CD4-positive, alpha-beta T cell (primary cell): ENCODE measurements at regions of chr1 and their contacts with region 1.

Region 1: GRCh38 chr1:206972728-206973127 is 2.5 kb upstream of the FCAMR start:
- DNase-seq: no peak
- ATAC-seq: no peak
- H3K4me3 ChIP-seq: no peak overlapping the region
- H3K4me3 Mint-ChIP-seq: no peak overlapping the region
- H3K27ac ChIP-seq: no peak overlapping the region
- H3K27ac Mint-ChIP-seq: no peak overlapping the region
- H3K4me1 ChIP-seq: peaks cover 5% of the 10 kb centered on the region
- H3K4me1 Mint-ChIP-seq: peaks cover 8% of the 10 kb centered on the region
- H3K27me3 ChIP-seq: no peaks in the 10 kb centered on the region
- H3K27me3 Mint-ChIP-seq: no peaks in the 10 kb centered on the region
- CTCF ChIP-seq: no peak

Region 2: DNA sequence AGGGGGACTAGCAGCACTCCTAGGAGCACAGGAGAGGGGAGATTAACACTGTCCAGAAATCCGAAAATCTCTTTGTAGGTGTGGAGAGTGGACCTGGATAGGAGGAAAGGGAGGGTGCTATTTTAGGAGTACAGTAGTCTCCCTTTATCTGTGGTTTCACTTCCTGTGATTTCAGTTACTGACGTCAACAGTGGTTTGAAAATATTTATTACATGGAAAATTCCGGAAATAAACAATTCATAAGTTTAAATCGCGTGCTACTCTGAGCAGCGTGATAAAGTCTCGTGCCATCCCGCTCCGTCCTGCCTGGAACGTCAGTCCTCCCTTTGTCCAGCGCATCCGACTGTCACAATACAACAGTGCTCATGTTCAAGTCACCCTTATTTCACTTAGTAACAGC is 82.0 kb before region 1 on chr1:
- CTCF ChIA-PET with region 1: no interaction called
- POLR2A ChIA-PET with region 1: no interaction called
- intact Hi-C with region 1: no loop called
- DNase-seq: peak in 3 of 14 experiments; percentile 57 to 72 (median 63)
- ATAC-seq: peak; percentile 78
- H3K4me3 ChIP-seq: no peak overlapping the region
- H3K4me3 Mint-ChIP-seq: peak overlapping the region; percentile 26
- H3K27ac ChIP-seq: no peak overlapping the region
- H3K27ac Mint-ChIP-seq: peak overlapping the region; percentile 22
- H3K4me1 ChIP-seq: peaks cover 21% of the 10 kb centered on the region
- H3K4me1 Mint-ChIP-seq: peaks cover 53% of the 10 kb centered on the region
- H3K27me3 ChIP-seq: no peaks in the 10 kb centered on the region
- H3K27me3 Mint-ChIP-seq: no peaks in the 10 kb centered on the region
- CTCF ChIP-seq: no peak

Region 3: GRCh38 chr1:206953126-206953525 is 19.6 kb before region 1 on chr1:
- CTCF ChIA-PET with region 1: no interaction called
- POLR2A ChIA-PET with region 1: no interaction called
- intact Hi-C with region 1: no loop called
- DNase-seq: no peak
- ATAC-seq: no peak
- H3K4me3 ChIP-seq: no peak overlapping the region
- H3K4me3 Mint-ChIP-seq: no peak overlapping the region
- H3K27ac ChIP-seq: no peak overlapping the region
- H3K27ac Mint-ChIP-seq: no peak overlapping the region
- H3K4me1 ChIP-seq: no peaks in the 10 kb centered on the region
- H3K4me1 Mint-ChIP-seq: no peaks in the 10 kb centered on the region
- H3K27me3 ChIP-seq: peaks cover 0 to 3% of the 10 kb centered on the region in 2 experiments
- H3K27me3 Mint-ChIP-seq: no peaks in the 10 kb centered on the region
- CTCF ChIP-seq: no peak

Region 4: DNA sequence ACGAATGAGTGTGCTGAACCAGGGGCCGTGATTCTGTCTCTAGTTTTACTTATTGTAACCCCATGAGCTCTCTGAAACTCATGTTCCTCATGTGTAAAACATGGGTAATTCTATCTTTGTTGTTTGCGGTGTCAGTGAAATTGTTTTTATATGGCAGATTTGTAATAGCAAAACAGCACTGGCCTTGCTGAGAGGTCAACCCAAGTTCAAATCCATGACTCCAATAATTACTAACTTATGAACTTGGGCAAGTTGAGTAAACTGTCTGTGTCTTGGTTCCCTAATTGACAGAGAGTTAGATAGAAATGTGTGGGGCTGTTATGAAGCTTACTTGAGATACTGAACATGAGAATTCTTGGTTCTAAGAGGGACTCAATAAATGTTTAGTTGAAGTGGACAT is 42.0 kb after region 1 on chr1:
- CTCF ChIA-PET with region 1: no interaction called
- POLR2A ChIA-PET with region 1: no interaction called
- intact Hi-C with region 1: loop called in 1 of 2 experiments (anchors 1 kb)
- DNase-seq: no peak
- ATAC-seq: no peak
- H3K4me3 ChIP-seq: no peak overlapping the region
- H3K4me3 Mint-ChIP-seq: no peak overlapping the region
- H3K27ac ChIP-seq: no peak overlapping the region
- H3K27ac Mint-ChIP-seq: no peak overlapping the region
- H3K4me1 ChIP-seq: no peaks in the 10 kb centered on the region
- H3K4me1 Mint-ChIP-seq: no peaks in the 10 kb centered on the region
- H3K27me3 ChIP-seq: peaks cover 5 to 9% of the 10 kb centered on the region in 2 experiments
- H3K27me3 Mint-ChIP-seq: peaks cover 31% of the 10 kb centered on the region
- CTCF ChIP-seq: no peak